HAP-1 (cell line): ENCODE measurements at regions of chr3 and their contacts with region 1.

Region 1: DNA sequence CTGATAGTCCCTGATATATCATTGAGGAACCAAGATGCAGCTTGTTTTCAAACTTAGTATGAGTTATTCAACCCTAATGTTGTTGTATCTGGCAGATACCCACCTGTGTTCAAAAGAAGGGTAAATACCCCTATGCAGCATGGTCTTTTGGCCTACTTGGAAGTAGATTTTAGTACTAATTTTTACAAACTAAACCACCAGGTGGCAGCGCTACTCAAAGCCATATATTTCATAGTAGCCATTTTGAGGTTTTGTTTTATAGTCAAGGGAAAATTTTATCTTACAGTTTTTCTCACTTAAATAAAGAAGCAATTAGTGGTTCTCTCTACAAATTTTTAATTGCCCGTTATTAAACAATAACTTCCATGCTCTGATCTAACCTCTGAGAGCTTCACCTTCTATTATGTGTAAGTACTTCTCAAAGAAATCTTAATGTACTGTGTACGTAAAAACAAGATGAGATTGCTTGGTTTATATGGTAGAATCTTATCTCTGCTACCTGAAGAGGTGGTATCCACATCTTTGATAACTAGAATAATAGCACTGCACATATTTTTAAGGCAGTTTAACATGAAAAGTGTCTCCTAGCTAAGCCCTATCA is 31.5 kb upstream of the MLF1 start:
- DNase-seq: peak; percentile 49 to 72
- H3K4me3 ChIP-seq: no peak overlapping the region
- H3K4me1 ChIP-seq: no peaks in the 10 kb centered on the region
- H3K27me3 ChIP-seq: no peaks in the 10 kb centered on the region

Region 2: DNA sequence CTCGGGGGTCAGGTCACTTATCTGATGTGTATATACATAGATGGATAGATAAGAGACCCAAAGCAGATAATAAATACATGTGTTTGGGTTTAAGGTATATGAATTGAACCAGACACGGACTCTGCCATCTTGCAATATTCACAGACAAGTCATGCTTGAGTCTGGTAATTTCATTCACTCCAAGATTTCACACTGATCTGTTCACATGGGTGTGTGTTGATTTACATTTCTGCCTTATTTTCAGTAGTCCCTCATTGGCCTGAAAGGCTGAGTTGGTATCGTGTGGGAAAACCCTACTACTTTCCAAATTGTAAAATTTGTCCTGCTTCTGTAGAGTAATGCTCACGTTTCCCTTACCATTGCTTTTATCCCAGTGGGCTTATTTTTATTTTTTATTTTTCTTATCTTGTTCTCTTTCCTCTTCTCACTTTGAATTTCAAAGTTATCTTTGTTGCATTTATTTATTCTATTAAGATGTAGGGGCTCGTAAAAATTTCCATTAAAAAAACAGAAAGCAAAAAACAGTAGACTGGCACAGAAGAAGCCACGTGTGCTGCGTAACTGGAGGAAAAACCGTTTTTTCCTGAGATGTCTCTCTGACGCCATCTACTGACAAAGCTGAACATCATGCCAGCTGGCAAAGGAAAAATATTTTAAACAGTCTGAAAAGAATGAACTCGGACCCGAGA is 251.5 kb after region 1 on chr3:
- in situ Hi-C with region 1: loop called (anchors 25 kb)
- DNase-seq: peak; percentile 46 to 70
- H3K4me3 ChIP-seq: no peak overlapping the region
- H3K4me1 ChIP-seq: no peaks in the 10 kb centered on the region; the same call in 1 of the 2 replicates
- H3K27me3 ChIP-seq: no peaks in the 10 kb centered on the region